Adrenal gland (tissue), 19 donors: ENCODE measurements at regions of chr10 and their contacts with region 1.

Region 1: DNA sequence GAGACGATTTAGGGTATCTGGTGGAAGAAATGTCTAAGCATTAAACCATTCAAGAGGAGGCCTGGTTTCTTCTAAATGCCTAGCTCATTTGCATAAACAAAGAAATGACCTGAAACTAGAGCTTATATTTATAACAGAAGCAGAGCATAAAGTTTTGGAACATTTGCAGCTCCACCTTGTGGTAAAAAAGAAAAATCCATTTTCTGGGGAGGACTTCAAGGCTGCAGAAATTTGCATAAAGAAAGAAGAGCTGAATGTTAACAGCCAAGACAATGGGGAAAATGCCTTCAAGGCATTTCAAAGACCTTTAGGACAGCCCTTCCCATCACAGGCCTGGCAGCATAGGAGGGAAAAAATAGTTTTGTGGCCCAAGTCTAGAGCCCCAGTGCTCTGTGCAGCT is 362.0 kb downstream of the ZNF248 start:
- DNase-seq: no peak
- H3K4me3 ChIP-seq: no peak overlapping the region
- H3K27ac ChIP-seq: no peak overlapping the region
- H3K4me1 ChIP-seq: no peaks in the 10 kb centered on the region
- H3K27me3 ChIP-seq: no peaks in the 10 kb centered on the region
- CTCF ChIP-seq: peak; percentile 48 to 63 (median 56)
- POLR2A ChIP-seq: no peak

Region 2: GRCh38 chr10:37434091-37434490 is 61.3 kb before region 1 on chr10:
- intact Hi-C with region 1: loop called in 1 of 2 experiments (anchors 10 kb)
- DNase-seq: peak in 1 of 7 donors; percentile 5
- H3K4me3 ChIP-seq: no peak overlapping the region
- H3K27ac ChIP-seq: no peak overlapping the region
- H3K4me1 ChIP-seq: no peaks in the 10 kb centered on the region
- H3K27me3 ChIP-seq: no peaks in the 10 kb centered on the region
- CTCF ChIP-seq: peak; percentile 33 to 65 (median 48)
- POLR2A ChIP-seq: no peak